ENCODE measurements at regions of chr12 and their contacts with region 1.

Region 1: GRCh38 chr12:70590051-70590450 is 47.2 kb downstream of the PTPRB start:
- DNase-seq: peak; percentile 49
- H3K4me3 ChIP-seq: no peak overlapping the region
- H3K27ac ChIP-seq: no peak overlapping the region
- H3K4me1 ChIP-seq: no peaks in the 10 kb centered on the region
- H3K27me3 ChIP-seq: no peaks in the 10 kb centered on the region
- CTCF ChIP-seq: peak; percentile 88 to 95

Region 2: DNA sequence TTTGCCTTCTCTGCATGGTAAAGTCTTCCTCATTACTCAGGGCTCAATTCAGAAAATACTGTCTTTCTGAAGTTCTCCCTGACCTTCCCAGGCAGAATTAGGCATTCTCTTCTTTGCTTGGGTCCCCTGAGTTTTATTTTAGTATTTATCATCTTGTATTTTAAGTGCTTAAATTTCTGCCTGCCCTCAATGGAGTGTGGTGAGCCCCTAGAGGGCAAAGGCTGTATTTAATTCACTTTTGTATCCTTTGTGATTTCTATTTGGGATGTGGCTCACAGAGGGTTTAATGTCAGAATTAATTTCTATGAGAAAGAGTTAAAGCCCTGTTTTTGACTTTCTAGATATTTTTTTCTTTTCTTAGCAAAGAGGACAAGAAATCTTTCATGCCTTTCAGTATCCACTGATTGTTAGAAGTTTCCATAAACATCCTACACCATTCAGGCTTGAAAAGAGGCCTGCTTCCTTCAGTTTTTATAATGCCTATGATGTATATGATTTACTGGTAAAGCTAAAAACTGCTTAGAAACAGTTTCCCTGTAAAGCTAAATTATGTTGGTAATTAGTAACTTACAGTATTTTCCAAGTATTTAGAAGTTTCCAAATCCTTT is 102.7 kb after region 1 on chr12:
- CTCF ChIA-PET with region 1: no interaction called
- dilution Hi-C with region 1: no loop called
- in situ Hi-C with region 1: no loop called
- intact Hi-C with region 1: loop called (anchors 1 kb)
- DNase-seq: peak; percentile 11
- H3K4me3 ChIP-seq: no peak overlapping the region
- H3K27ac ChIP-seq: no peak overlapping the region
- H3K4me1 ChIP-seq: no peaks in the 10 kb centered on the region
- H3K27me3 ChIP-seq: no peaks in the 10 kb centered on the region
- CTCF ChIP-seq: peak; percentile 62 to 71

Region 3: GRCh38 chr12:70719672-70720420 is 129.8 kb after region 1 on chr12:
- CTCF ChIA-PET with region 1: no interaction called
- dilution Hi-C with region 1: no loop called
- in situ Hi-C with region 1: loop called (anchors 5 kb)
- intact Hi-C with region 1: loop called (anchors 1 kb)
- DNase-seq: peak; percentile 9
- H3K4me3 ChIP-seq: peak overlapping the region in 2 of 3 experiments; percentile 14 to 25
- H3K27ac ChIP-seq: no peak overlapping the region
- H3K4me1 ChIP-seq: no peaks in the 10 kb centered on the region
- H3K27me3 ChIP-seq: no peaks in the 10 kb centered on the region
- CTCF ChIP-seq: peak; percentile 88 to 95

Region 4: DNA sequence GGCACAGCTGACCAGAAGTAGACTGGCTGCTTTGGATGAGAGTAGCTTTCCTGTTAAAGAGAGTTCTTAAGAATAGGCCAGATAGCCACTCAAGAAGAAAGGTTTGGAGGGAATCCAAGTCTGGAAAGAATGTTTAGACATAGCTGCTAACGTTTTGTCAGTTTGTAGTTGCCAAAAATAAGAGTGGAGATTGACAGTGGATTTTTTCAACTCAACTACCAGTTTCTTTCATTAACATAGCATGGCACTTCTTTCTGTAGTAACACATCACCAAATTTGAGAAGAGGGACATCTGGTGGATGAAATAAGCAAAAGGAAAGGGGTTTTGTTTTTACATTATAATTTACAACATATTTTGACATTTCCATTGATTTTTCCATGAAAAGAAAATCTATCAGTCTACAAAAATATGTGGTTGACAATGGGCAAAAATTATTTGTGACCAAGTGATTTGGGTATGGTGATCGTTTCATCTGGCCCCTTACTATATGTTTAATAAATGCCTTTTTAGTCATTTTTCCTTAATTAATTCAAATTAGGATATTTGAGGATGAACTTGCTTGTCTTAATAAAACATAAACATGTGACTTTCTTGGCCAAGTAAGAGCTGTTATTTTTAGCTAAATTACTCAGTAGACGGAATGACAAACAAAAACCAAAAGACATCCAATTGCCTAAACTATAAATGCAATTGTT is 259.4 kb after region 1 on chr12:
- CTCF ChIA-PET with region 1: no interaction called
- dilution Hi-C with region 1: no loop called
- in situ Hi-C with region 1: no loop called
- intact Hi-C with region 1: loop called (anchors 1 kb)
- DNase-seq: peak; percentile 8
- H3K4me3 ChIP-seq: no peak overlapping the region
- H3K27ac ChIP-seq: no peak overlapping the region
- H3K4me1 ChIP-seq: no peaks in the 10 kb centered on the region
- H3K27me3 ChIP-seq: peaks cover 2% of the 10 kb centered on the region
- CTCF ChIP-seq: peak; percentile 25 to 62

Region 5: DNA sequence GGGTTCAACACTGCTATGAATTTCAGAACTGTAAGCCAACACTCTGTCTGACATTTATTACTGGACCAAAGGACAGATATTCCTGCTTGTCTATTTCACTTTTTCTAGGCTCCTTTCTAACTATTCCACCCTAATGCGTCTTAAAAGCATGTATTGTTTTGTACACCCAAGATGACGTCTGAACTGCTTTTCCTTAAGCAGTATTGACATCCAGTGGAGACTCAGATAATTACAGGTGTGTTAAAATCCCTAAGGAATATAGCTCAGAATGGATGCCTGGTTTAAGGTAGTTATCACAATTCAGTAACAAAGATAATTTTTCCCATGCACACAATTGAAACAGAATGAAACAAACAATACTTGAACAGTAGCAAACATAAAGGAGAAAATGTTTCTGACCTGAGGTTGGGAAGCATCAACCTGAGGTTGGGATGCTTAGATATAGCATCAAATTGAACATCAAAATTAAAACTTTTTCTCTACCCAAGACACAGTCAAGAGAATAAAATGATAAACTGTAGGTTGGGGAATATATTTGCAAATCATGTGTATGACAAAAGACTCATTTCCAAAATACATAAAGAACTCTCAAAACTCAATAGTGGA is 424.2 kb after region 1 on chr12:
- CTCF ChIA-PET with region 1: interaction called, 5 read pairs
- dilution Hi-C with region 1: no loop called
- in situ Hi-C with region 1: loop called in 1 of 2 experiments (anchors 25 kb)
- intact Hi-C with region 1: loop called (anchors 5 kb)
- DNase-seq: peak; percentile 32
- H3K4me3 ChIP-seq: no peak overlapping the region
- H3K27ac ChIP-seq: no peak overlapping the region
- H3K4me1 ChIP-seq: no peaks in the 10 kb centered on the region
- H3K27me3 ChIP-seq: no peaks in the 10 kb centered on the region
- CTCF ChIP-seq: peak; percentile 46 to 65

Measured in mammary epithelial cell (primary cell).